ENCODE measurements at regions of chr10 and their contacts with region 1.

Region 1: DNA sequence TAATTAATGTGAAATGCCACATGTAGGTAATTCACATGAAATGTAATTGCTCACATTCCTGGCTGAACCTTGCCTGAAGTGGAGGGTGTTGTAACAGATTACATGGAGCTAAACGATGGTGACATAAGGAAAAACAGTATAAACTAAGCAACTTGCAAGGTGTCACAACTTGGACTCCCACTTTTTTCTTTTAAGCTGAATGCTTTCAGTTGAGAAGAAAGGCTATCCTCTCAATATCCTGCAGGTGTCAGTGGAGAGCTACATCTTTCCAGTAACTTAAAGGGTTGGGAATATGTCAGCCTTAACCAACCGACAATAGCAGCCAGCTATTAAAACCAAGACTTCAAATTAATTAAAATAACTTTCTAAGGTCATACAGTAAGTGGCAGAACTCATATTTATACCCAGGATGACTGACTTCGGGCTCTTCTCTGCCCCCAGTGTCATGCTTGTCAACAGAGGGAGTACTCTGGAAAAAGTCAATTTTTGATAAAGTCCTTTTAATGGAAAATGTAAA is 33.7 kb downstream of the NRBF2 start:
- DNase-seq: peak; percentile 30
- CTCF ChIP-seq: peak; percentile 45

Region 2: DNA sequence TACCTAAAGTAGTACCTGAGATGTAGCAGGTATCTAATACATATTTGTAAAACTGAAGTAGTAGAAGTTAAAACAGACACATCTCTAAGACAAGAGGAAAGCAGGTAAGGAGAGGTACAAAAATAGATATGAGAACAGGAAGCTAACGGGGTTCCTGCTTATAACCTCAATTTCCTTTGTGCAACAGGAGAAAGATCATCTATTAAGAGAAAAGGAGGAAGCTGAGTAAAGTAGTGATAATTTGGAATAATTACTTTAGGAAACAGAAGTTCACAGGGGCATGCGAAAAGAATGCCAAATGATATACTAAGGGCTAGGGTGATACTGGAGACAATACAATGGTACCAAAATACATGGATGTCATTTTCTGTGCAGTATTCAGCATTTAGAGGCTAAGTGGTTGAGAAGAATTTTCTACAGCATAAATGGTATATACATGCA is 75.1 kb after region 1 on chr10:
- in situ Hi-C with region 1: no loop called
- DNase-seq: no peak
- CTCF ChIP-seq: no peak

Region 3: GRCh38 chr10:63720072-63720537 is 553.3 kb after region 1 on chr10:
- in situ Hi-C with region 1: loop called (anchors 10 kb)
- DNase-seq: peak; percentile 47
- CTCF ChIP-seq: peak; percentile 88

Region 4: GRCh38 chr10:63965846-63966245 is 799.0 kb after region 1 on chr10:
- in situ Hi-C with region 1: no loop called
- DNase-seq: no peak
- CTCF ChIP-seq: no peak

Measured in GM13976 (cell line).